AG04449 (cell line): ENCODE measurements at regions of chr9 and their contacts with region 1.

Region 1: GRCh38 chr9:136679431-136679941 is 7.8 kb downstream of the AGPAT2 start:
- DNase-seq: no peak
- H3K4me3 ChIP-seq: no peak overlapping the region
- CTCF ChIP-seq: no peak

Region 2: GRCh38 chr9:136665111-136665703 is 14.3 kb before region 1 on chr9:
- CTCF ChIA-PET with region 1: interaction called, 11 read pairs
- POLR2A ChIA-PET with region 1: no interaction called
- DNase-seq: no peak
- H3K4me3 ChIP-seq: peak overlapping the region; percentile 49
- CTCF ChIP-seq: peak; percentile 23